Naive thymus-derived CD4-positive, alpha-beta T cell (primary cell): ENCODE measurements at regions of chr16 and their contacts with region 1.

Region 1: DNA sequence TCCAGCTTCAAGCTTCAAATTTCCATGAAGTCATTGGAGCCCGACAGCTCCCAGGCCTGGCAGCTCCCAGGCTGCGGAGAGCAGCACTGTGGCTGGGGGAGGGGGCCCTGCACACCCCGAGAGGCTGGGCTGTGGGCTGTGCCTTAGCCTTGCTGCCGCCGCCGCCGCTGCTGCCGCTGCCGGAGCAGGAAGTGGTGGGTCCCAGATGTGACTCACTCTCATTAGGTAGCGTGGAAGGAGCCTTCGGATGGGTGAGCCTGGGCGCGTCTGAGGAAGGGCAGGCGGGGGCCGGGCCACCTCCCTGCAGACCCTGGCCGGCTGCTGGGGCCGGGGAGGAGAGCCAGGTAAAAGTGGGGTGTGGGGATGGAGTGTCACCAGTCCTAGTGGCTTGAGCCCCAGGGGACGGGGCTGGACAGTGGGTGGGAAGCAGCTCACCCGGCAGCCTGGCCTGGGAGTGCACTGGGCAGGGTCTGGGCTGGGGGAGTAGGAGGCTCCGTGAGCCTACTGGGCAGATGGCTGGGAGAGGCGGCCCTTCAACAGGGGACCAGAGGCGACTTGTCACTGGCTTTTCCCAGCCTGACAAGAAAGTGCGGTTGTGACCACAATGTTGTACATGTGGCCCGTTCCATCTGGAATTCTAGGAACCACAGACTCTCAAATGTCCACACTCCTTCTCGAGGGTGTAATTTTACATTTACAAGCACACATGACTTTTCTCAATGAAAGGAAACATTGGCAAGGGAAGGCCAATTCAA is at the start of gene ADCY7:
- DNase-seq: peak; percentile 57 to 84 (median 77)
- ATAC-seq: peak; percentile 90
- H3K4me3 ChIP-seq: peak within 1 kb of the TSS; percentile 87
- H3K4me3 Mint-ChIP-seq: peak within 1 kb of the TSS; percentile 83 to 98 (median 96)
- H3K27ac ChIP-seq: peak within 1 kb of the TSS; percentile 85
- H3K27ac Mint-ChIP-seq: peak within 1 kb of the TSS; percentile 77 to 99 (median 97)
- H3K4me1 ChIP-seq: peaks cover 41 to 46% of the 10 kb centered on the region in 2 donors
- H3K4me1 Mint-ChIP-seq: peaks cover 56 to 76% (median 60%) of the 10 kb centered on the region in 7 donors
- H3K27me3 ChIP-seq: no peaks in the 10 kb centered on the region
- H3K27me3 Mint-ChIP-seq: no peaks in the 10 kb centered on the region
- total RNA-seq, gene ADCY7: 179 to 326 (median 208) TPM

Region 2: GRCh38 chr16:50024684-50025536 is 241.6 kb before region 1 on chr16 and contains the start of gene CNEP1R1:
- CTCF ChIA-PET with region 1: interaction called, 3 read pairs
- POLR2A ChIA-PET with region 1: no interaction called
- intact Hi-C with region 1: loop called (anchors 2 to 10 kb)
- DNase-seq: peak; percentile 82 to 95 (median 92)
- ATAC-seq: peak; percentile 98
- H3K4me3 ChIP-seq: peak within 1 kb of the TSS; percentile 97
- H3K4me3 Mint-ChIP-seq: peak within 1 kb of the TSS; percentile 88 to 99 (median 96)
- H3K27ac ChIP-seq: peak within 1 kb of the TSS; percentile 81
- H3K27ac Mint-ChIP-seq: peak within 1 kb of the TSS; percentile 87 to 97 (median 94)
- H3K4me1 ChIP-seq: peaks cover 11 to 16% of the 10 kb centered on the region in 2 donors
- H3K4me1 Mint-ChIP-seq: peaks cover 5 to 42% (median 28%) of the 10 kb centered on the region in 7 donors
- H3K27me3 ChIP-seq: no peaks in the 10 kb centered on the region
- H3K27me3 Mint-ChIP-seq: peaks cover 0 to 16% (median 0%) of the 10 kb centered on the region in 5 donors
- total RNA-seq, gene CNEP1R1: 26.8 to 41.0 (median 34.3) TPM

Region 3: DNA sequence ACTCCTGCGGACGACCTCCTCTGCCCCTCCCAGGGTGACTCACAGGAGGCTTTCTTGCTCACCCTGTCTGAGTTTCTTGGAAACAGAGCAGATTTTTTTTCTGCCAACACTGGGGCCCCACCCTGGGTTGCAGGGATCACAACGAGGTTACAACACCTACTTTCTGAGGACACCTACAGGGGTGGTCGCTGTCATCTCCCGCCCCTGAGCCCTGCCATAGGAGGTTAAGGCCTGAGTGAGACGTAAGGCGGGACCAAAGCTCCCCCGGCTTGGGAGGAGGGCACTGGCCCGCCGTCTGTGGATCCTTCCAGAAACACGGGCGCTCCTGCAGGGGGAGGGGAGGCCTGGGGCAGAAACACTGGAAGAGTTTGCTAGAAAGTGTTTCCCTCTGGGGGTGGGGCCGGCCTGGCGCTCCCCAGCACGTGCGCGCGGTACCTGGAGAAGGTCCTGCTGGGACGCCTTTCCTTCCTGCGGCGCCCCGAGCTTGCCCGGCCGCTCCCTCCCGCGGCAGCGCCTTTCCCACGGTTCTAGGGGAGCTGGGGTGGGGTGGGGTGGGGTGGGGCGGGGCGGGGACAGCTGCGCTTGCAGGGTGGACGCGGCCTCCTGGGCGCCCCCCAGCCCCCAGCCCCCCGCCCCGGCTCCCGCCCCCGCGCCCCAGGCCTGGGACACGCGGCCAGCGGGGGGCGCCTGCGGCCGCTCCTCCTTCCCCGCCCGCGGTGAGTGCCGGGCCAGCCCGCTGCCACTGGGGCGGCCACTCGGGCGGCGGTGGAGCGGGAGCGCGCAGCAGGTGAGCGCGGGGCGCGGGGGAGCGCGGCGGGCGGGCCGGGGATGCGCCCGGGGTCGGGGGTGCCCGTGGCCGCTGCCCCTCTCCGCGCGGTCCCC is 20.9 kb before region 1 on chr16:
- CTCF ChIA-PET with region 1: no interaction called
- POLR2A ChIA-PET with region 1: interaction called, 3 read pairs
- intact Hi-C with region 1: loop called in 1 of 2 experiments (anchors 2 kb)
- DNase-seq: peak in 5 of 9 donors; percentile 15 to 67 (median 18)
- ATAC-seq: peak; percentile 84
- H3K4me3 ChIP-seq: peak overlapping the region; percentile 42
- H3K4me3 Mint-ChIP-seq: peak overlapping the region; percentile 58 to 82 (median 76)
- H3K27ac ChIP-seq: no peak overlapping the region
- H3K27ac Mint-ChIP-seq: peak overlapping the region in 4 of 9 donors; percentile 41 to 80 (median 61)
- H3K4me1 ChIP-seq: peaks cover 6 to 8% of the 10 kb centered on the region in 2 donors
- H3K4me1 Mint-ChIP-seq: peaks cover 0 to 16% (median 6%) of the 10 kb centered on the region in 7 donors
- H3K27me3 ChIP-seq: no peaks in the 10 kb centered on the region
- H3K27me3 Mint-ChIP-seq: peaks cover 0 to 13% (median 0%) of the 10 kb centered on the region in 5 donors

Region 4: GRCh38 chr16:50303657-50304466 is 37.3 kb after region 1 on chr16:
- CTCF ChIA-PET with region 1: no interaction called
- POLR2A ChIA-PET with region 1: no interaction called
- intact Hi-C with region 1: no loop called
- DNase-seq: peak in 1 of 9 donors; percentile 2
- ATAC-seq: no peak
- H3K4me3 ChIP-seq: no peak overlapping the region
- H3K4me3 Mint-ChIP-seq: no peak overlapping the region
- H3K27ac ChIP-seq: no peak overlapping the region
- H3K27ac Mint-ChIP-seq: peak overlapping the region in 3 of 9 donors; percentile 51 to 81 (median 62)
- H3K4me1 ChIP-seq: no peaks in the 10 kb centered on the region
- H3K4me1 Mint-ChIP-seq: peaks cover 0 to 3% (median 0%) of the 10 kb centered on the region in 7 donors
- H3K27me3 ChIP-seq: no peaks in the 10 kb centered on the region
- H3K27me3 Mint-ChIP-seq: no peaks in the 10 kb centered on the region

Region 5: DNA sequence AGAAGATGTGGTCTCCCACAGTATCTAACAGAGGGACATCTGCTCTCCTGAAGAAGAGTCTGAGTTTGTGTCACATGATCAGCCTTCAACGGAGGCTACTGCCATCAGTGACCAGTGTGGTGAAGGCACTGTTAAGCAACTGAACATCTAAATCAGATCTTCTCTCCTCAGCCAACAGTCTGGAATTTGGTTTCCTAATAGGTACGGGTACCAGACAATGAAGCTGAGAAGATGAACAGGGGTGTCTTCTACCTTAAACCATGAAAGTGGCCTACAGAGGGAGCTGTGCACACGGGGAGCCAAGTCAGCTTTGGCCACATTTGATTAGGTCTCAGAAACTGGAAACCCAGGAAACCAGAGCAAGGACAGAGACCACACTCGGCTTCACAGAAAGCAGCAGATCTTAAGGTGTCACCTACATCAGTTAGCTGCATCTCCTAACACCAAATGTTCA is 60.5 kb after region 1 on chr16:
- CTCF ChIA-PET with region 1: interaction called, 8 read pairs
- POLR2A ChIA-PET with region 1: interaction called, 14 read pairs
- intact Hi-C with region 1: loop called (anchors 1 to 2 kb)
- DNase-seq: peak in 8 of 9 donors; percentile 53 to 89 (median 78)
- ATAC-seq: peak; percentile 97
- H3K4me3 ChIP-seq: no peak overlapping the region
- H3K4me3 Mint-ChIP-seq: peak overlapping the region in 8 of 10 donors; percentile 8 to 57 (median 26)
- H3K27ac ChIP-seq: peak overlapping the region; percentile 44
- H3K27ac Mint-ChIP-seq: peak overlapping the region; percentile 54 to 94 (median 81)
- H3K4me1 ChIP-seq: peaks cover 10 to 34% of the 10 kb centered on the region in 2 donors
- H3K4me1 Mint-ChIP-seq: peaks cover 37 to 62% (median 49%) of the 10 kb centered on the region in 7 donors
- H3K27me3 ChIP-seq: no peaks in the 10 kb centered on the region
- H3K27me3 Mint-ChIP-seq: no peaks in the 10 kb centered on the region

Region 6: DNA sequence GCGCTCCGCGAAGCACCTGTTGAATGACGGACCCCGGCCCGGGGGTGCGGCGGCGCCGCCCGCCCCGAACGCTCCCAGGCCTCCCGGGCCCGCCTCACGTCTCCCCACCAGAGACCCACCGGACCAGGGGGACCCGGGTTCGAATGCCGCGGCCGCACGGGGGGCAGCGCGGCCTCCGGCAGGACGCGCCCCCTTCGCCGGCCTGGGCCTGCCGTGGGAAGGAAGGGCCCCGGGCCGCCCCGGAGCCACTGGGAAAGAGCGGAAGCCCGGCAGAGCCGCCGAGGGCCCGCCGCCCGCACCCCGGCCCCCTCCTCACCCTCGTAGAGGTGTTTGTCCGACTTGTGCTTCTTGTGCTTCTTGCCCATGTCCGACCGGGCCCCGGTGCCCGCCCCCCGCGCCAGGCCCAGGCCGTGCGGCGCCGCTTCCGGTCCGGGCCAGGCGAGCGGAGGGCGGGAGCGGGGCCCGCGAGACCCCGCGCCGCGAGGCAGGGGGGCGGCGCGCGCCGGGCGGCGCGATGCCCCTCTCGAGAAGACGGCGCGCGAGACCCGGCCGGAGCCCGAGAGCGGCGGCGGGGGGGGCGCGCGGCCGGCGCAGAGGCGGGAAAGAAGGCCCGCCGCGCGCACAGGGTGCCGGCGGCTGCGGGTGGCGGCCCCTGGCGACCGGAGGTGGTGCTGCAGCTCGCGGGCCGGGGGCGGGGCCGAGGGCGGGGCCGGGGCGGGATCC is 102.1 kb after region 1 on chr16 and contains the start of gene BRD7:
- CTCF ChIA-PET with region 1: interaction called, 6 read pairs
- POLR2A ChIA-PET with region 1: no interaction called
- intact Hi-C with region 1: loop called (anchors 1 to 5 kb)
- DNase-seq: peak; percentile 50 to 82 (median 68)
- ATAC-seq: peak; percentile 98
- H3K4me3 ChIP-seq: peak within 1 kb of the TSS; percentile 61
- H3K4me3 Mint-ChIP-seq: peak within 1 kb of the TSS; percentile 92 to 98 (median 96)
- H3K27ac ChIP-seq: peak within 1 kb of the TSS; percentile 86
- H3K27ac Mint-ChIP-seq: peak within 1 kb of the TSS; percentile 92 to 99 (median 96)
- H3K4me1 ChIP-seq: peaks cover 27 to 39% of the 10 kb centered on the region in 2 donors
- H3K4me1 Mint-ChIP-seq: peaks cover 40 to 58% (median 56%) of the 10 kb centered on the region in 7 donors
- H3K27me3 ChIP-seq: no peaks in the 10 kb centered on the region
- H3K27me3 Mint-ChIP-seq: no peaks in the 10 kb centered on the region
- total RNA-seq, gene BRD7: 80.9 to 91.1 (median 85.0) TPM

Region 7: GRCh38 chr16:50806099-50807062 is 539.9 kb after region 1 on chr16:
- CTCF ChIA-PET with region 1: interaction called, 4 read pairs
- POLR2A ChIA-PET with region 1: no interaction called
- intact Hi-C with region 1: loop called (anchors 1 to 2 kb)
- DNase-seq: peak; percentile 66 to 92 (median 89)
- ATAC-seq: peak; percentile 98
- H3K4me3 ChIP-seq: peak overlapping the region; percentile 34
- H3K4me3 Mint-ChIP-seq: peak overlapping the region; percentile 12 to 90 (median 80)
- H3K27ac ChIP-seq: no peak overlapping the region
- H3K27ac Mint-ChIP-seq: peak overlapping the region; percentile 15 to 92 (median 81)
- H3K4me1 ChIP-seq: peaks cover 3 to 5% of the 10 kb centered on the region in 2 donors
- H3K4me1 Mint-ChIP-seq: peaks cover 8 to 19% (median 13%) of the 10 kb centered on the region in 7 donors
- H3K27me3 ChIP-seq: no peaks in the 10 kb centered on the region
- H3K27me3 Mint-ChIP-seq: no peaks in the 10 kb centered on the region